ENCODE measurements at regions of chr12 and their contacts with region 1.

Region 1: GRCh38 chr12:117587631-117588287 is 226.3 kb upstream of the NOS1 start:
- DNase-seq: peak; percentile 60 to 77
- ATAC-seq: peak; percentile 75 to 98; a peak in 5 of 6 replicates
- H3K4me3 ChIP-seq: no peak overlapping the region
- H3K27ac ChIP-seq: peak overlapping the region; percentile 44 to 65; a peak in 5 of 6 replicates
- H3K4me1 ChIP-seq: no peaks in the 10 kb centered on the region
- CTCF ChIP-seq: peak; percentile 89
- EP300 ChIP-seq: no peak
- POLR2A ChIP-seq: no peak
- RAD21 ChIP-seq: peak; percentile 92 to 94

Region 2: DNA sequence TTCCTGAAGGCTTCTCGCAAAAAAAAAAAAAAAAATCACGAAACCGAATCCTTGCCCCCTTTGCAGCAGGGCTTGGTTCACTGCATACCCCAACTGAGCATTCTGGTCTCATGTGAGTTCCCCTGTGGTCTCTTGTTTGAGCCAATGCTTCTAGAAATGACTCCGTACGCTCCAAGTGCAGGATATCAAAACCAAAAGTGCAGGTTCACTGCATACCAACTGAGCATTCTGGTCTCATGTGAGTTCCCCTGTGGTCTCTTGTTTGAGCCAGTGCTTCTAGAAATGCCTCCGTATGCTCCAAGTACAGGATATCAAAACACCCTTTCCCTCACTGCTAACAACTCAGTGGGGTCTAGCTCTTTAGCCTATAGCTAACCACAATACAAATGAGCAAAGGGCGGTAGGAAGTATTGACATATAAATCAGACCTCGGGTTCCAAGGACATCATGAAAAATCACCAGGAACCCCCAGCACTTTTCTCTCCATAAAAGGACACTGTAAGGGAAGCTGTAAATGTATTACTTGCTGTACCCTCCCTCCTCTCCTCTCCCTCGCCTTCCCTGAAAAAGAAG is 20.0 kb before region 1 on chr12:
- CTCF ChIA-PET with region 1: interaction called, 10 read pairs
- POLR2A ChIA-PET with region 1: no interaction called
- DNase-seq: no peak
- ATAC-seq: no peak
- H3K4me3 ChIP-seq: no peak overlapping the region
- H3K27ac ChIP-seq: no peak overlapping the region
- H3K4me1 ChIP-seq: no peaks in the 10 kb centered on the region
- CTCF ChIP-seq: no peak
- EP300 ChIP-seq: no peak
- POLR2A ChIP-seq: no peak
- RAD21 ChIP-seq: no peak

Region 3: GRCh38 chr12:117574655-117575054 is 13.1 kb before region 1 on chr12:
- CTCF ChIA-PET with region 1: interaction called, 40 read pairs
- POLR2A ChIA-PET with region 1: no interaction called
- DNase-seq: no peak
- ATAC-seq: no peak
- H3K4me3 ChIP-seq: no peak overlapping the region
- H3K27ac ChIP-seq: no peak overlapping the region
- H3K4me1 ChIP-seq: no peaks in the 10 kb centered on the region
- CTCF ChIP-seq: no peak
- EP300 ChIP-seq: no peak
- POLR2A ChIP-seq: no peak
- RAD21 ChIP-seq: no peak

Region 4: GRCh38 chr12:117599849-117600248 is 12.1 kb after region 1 on chr12:
- CTCF ChIA-PET with region 1: interaction called, 10 read pairs
- POLR2A ChIA-PET with region 1: no interaction called
- DNase-seq: no peak
- ATAC-seq: no peak
- H3K4me3 ChIP-seq: no peak overlapping the region
- H3K27ac ChIP-seq: no peak overlapping the region
- H3K4me1 ChIP-seq: peaks cover 7% of the 10 kb centered on the region; the same call in 1 of the 3 replicates
- CTCF ChIP-seq: no peak
- EP300 ChIP-seq: no peak
- POLR2A ChIP-seq: no peak
- RAD21 ChIP-seq: no peak

Region 5: GRCh38 chr12:117607778-117608177 is 20.0 kb after region 1 on chr12:
- CTCF ChIA-PET with region 1: interaction called, 22 read pairs
- POLR2A ChIA-PET with region 1: no interaction called
- DNase-seq: no peak
- ATAC-seq: peak; percentile 30 to 38; a peak in 2 of 6 replicates
- H3K4me3 ChIP-seq: no peak overlapping the region
- H3K27ac ChIP-seq: no peak overlapping the region
- H3K4me1 ChIP-seq: no peaks in the 10 kb centered on the region
- CTCF ChIP-seq: no peak
- EP300 ChIP-seq: no peak
- POLR2A ChIP-seq: no peak
- RAD21 ChIP-seq: no peak

Region 6: DNA sequence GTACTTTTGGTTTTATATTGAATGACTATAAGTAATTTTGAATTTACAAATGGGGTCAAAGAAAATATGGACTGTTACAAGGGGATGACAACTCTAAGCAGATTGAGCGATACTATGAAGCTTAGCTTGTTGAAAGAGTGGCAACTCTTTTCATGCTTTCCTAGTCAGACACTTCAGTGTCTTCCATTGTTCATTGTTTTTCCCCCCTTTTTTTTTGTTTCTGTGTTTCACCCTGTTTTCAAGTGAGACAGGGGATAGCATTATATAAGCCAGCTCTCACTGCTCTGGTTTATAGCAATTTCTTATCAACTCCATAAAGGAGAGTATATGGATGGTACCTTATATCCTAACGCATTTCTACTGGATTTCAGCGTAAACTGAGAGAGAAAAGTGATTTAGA is 572.8 kb after region 1 on chr12:
- CTCF ChIA-PET with region 1: no interaction called
- POLR2A ChIA-PET with region 1: no interaction called
- DNase-seq: no peak
- ATAC-seq: no peak
- H3K4me3 ChIP-seq: no peak overlapping the region
- H3K27ac ChIP-seq: no peak overlapping the region
- H3K4me1 ChIP-seq: no peaks in the 10 kb centered on the region
- CTCF ChIP-seq: no peak
- EP300 ChIP-seq: no peak
- POLR2A ChIP-seq: no peak
- RAD21 ChIP-seq: no peak